Endothelial cell of umbilical vein (primary cell): ENCODE measurements at regions of chr14 and their contacts with region 1.

Region 1: DNA sequence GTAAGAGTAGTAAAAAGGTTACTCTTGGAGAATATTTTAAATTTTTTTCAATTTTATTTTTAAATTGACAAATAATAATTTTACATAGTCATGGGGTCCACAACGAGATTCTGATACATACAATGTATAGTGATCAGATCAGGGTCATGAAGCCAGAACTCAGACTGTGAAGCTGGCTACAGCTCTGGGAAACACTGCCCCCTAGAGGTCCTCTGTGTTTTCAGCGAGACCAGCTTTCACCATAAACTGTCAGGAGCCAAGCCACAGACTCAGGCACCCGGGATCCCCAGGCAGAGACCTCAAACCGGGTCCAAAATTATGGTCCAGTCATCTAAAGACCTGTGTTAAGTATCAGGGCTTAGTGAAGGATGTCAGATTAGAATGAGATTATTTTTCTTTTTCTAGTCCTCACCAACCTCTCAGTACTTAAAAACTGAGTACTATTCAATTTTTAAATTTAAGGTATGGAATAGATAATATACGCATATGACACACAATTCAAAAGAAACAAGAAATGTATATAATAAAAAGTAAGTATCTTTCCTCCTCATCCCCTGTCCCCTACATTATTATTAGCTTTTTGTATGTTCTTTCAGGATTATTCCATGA is 397.1 kb downstream of the MDGA2 start:
- DNase-seq: peak; percentile 64
- H3K4me3 ChIP-seq: no peak overlapping the region
- H3K27ac ChIP-seq: no peak overlapping the region
- H3K4me1 ChIP-seq: no peaks in the 10 kb centered on the region
- H3K27me3 ChIP-seq: no peaks in the 10 kb centered on the region
- CTCF ChIP-seq: peak; percentile 78 to 85
- POLR2A ChIP-seq: no peak

Region 2: DNA sequence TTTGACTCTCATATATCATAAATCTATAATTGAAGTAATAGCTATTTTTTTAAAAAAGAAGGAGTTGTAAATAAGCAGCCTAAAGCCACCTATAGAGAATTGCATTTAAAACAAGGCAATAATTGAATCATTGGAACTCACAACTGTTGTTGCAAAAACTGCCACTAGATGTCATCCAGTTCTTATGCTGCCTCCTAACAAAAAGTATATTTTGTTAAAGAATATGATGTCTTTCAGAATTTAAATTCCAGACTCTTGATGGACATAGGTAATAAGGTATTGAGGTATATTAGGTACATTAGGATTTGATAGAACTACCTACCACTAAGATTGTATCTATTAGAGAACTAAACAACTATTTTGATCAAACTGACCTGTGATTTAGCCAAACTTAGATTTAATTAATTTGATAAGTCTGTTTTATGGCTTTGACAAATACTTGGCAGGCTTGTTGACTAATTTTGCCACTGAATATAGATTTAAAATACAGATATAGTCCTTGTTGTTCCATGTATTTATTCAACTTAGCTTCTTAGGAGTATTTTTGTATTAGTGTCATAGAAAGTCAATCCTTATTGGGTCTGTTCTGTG is 1028.1 kb before region 1 on chr14:
- CTCF ChIA-PET with region 1: no interaction called
- POLR2A ChIA-PET with region 1: no interaction called
- dilution Hi-C with region 1: no loop called
- intact Hi-C with region 1: loop called (anchors 5 kb)
- DNase-seq: peak; percentile 52
- H3K4me3 ChIP-seq: no peak overlapping the region
- H3K27ac ChIP-seq: no peak overlapping the region
- H3K4me1 ChIP-seq: no peaks in the 10 kb centered on the region
- H3K27me3 ChIP-seq: no peaks in the 10 kb centered on the region
- CTCF ChIP-seq: peak; percentile 27 to 48
- POLR2A ChIP-seq: no peak

Region 3: DNA sequence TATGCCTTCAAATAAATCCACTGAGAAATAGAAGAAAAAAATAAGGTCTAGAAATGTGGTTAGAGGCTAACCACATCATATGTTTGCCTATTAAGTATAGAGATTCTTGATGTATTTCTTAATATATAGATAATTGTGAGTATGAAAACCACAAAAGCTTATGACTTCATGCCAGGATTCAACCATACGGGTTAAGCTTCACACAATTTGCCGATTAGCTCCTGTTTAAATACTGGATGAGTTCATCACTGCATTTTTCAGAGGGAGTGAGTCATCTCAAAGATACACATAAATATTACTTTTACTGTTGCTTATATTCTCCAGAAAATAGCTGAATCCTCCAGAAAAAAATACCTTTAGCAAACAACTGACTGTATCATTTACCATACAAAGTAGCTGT is 706.4 kb before region 1 on chr14:
- CTCF ChIA-PET with region 1: interaction called, 10 read pairs
- POLR2A ChIA-PET with region 1: no interaction called
- dilution Hi-C with region 1: no loop called
- intact Hi-C with region 1: no loop called
- DNase-seq: peak; percentile 59
- H3K4me3 ChIP-seq: no peak overlapping the region
- H3K27ac ChIP-seq: peak overlapping the region; percentile 55
- H3K4me1 ChIP-seq: peaks cover 40% of the 10 kb centered on the region
- H3K27me3 ChIP-seq: no peaks in the 10 kb centered on the region
- CTCF ChIP-seq: no peak
- POLR2A ChIP-seq: no peak

Region 4: DNA sequence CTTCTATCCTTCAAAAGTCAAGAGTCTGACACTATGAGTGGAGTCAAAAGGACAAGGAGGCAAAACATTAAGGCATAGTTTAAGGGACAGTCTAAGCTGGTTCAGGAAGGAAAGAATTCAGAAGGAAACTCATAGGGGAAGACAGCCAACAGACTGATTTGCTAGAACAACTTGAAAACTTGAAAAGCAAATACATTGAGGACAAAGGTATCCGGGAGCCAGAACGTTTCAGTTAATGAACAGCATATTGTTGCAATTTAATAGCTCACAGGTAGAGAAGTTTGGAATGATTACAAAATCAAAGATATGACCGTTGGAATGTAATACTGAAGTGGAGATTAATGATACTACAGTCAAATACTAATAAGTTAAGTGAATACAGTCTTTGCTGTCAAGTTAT is 314.0 kb before region 1 on chr14:
- CTCF ChIA-PET with region 1: no interaction called
- POLR2A ChIA-PET with region 1: no interaction called
- dilution Hi-C with region 1: no loop called
- intact Hi-C with region 1: no loop called
- DNase-seq: no peak
- H3K4me3 ChIP-seq: no peak overlapping the region
- H3K27ac ChIP-seq: no peak overlapping the region
- H3K4me1 ChIP-seq: no peaks in the 10 kb centered on the region
- H3K27me3 ChIP-seq: no peaks in the 10 kb centered on the region
- CTCF ChIP-seq: no peak
- POLR2A ChIP-seq: no peak

Region 5: GRCh38 chr14:47040550-47040949 is 237.8 kb before region 1 on chr14:
- CTCF ChIA-PET with region 1: interaction called, 14 read pairs
- POLR2A ChIA-PET with region 1: no interaction called
- dilution Hi-C with region 1: no loop called
- intact Hi-C with region 1: loop called (anchors 1 kb)
- DNase-seq: peak; percentile 51
- H3K4me3 ChIP-seq: no peak overlapping the region
- H3K27ac ChIP-seq: no peak overlapping the region
- H3K4me1 ChIP-seq: no peaks in the 10 kb centered on the region
- H3K27me3 ChIP-seq: no peaks in the 10 kb centered on the region
- CTCF ChIP-seq: peak; percentile 5 to 13
- POLR2A ChIP-seq: no peak

Region 6: GRCh38 chr14:47085678-47086077 is 192.7 kb before region 1 on chr14:
- CTCF ChIA-PET with region 1: interaction called, 12 read pairs
- POLR2A ChIA-PET with region 1: no interaction called
- dilution Hi-C with region 1: no loop called
- intact Hi-C with region 1: no loop called
- DNase-seq: no peak
- H3K4me3 ChIP-seq: no peak overlapping the region
- H3K27ac ChIP-seq: no peak overlapping the region
- H3K4me1 ChIP-seq: no peaks in the 10 kb centered on the region
- H3K27me3 ChIP-seq: no peaks in the 10 kb centered on the region
- CTCF ChIP-seq: no peak
- POLR2A ChIP-seq: no peak

Region 7: DNA sequence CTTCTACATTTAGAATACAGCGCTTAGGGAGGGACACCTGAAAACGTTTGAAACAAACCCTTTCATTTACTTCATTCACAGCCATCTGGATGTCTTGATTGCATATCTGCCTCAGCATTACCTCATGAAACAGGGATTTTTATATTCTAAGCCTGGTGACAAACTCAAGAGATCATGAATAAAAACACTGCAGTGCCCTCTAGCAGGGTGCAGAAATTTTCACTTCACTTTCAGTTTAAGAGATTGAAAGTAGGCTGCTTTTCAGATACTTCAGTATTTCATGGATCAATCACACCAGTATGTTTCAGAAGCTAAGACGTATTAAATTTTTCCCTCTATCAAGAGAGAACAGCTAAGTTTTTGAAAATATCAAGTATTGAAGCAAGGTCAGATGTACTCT is 70.7 kb before region 1 on chr14:
- CTCF ChIA-PET with region 1: interaction called, 12 read pairs
- POLR2A ChIA-PET with region 1: no interaction called
- dilution Hi-C with region 1: no loop called
- intact Hi-C with region 1: no loop called
- DNase-seq: peak; percentile 59
- H3K4me3 ChIP-seq: no peak overlapping the region
- H3K27ac ChIP-seq: no peak overlapping the region
- H3K4me1 ChIP-seq: peaks cover 10% of the 10 kb centered on the region
- H3K27me3 ChIP-seq: no peaks in the 10 kb centered on the region
- CTCF ChIP-seq: peak in 1 of 2 donors; percentile 9
- POLR2A ChIP-seq: no peak

Region 8: DNA sequence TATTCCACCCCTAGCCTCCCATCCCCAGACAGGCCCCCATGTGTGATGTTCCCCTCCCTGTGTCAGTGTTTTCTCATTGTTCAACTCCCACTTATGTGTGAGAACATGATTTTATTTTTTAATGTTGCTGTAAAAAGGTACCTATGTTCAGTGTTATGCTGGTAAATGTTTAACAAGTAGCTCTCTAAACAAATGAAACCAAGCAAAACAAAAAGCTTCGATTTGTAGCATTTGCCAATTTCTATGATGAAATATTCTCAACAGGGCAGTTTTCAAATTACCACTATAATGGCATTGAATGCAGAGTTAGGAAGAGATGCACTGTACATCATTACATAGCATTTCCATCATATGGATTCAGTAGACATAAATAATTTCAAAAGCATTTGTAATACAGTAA is 13.5 kb before region 1 on chr14:
- CTCF ChIA-PET with region 1: interaction called, 14 read pairs
- POLR2A ChIA-PET with region 1: no interaction called
- dilution Hi-C with region 1: no loop called
- intact Hi-C with region 1: no loop called
- DNase-seq: no peak
- H3K4me3 ChIP-seq: no peak overlapping the region
- H3K27ac ChIP-seq: no peak overlapping the region
- H3K4me1 ChIP-seq: peaks cover 4% of the 10 kb centered on the region
- H3K27me3 ChIP-seq: no peaks in the 10 kb centered on the region
- CTCF ChIP-seq: no peak
- POLR2A ChIP-seq: no peak

Region 9: GRCh38 chr14:47346849-47347248 is 68.5 kb after region 1 on chr14:
- CTCF ChIA-PET with region 1: no interaction called
- POLR2A ChIA-PET with region 1: no interaction called
- dilution Hi-C with region 1: no loop called
- intact Hi-C with region 1: no loop called
- DNase-seq: no peak
- H3K4me3 ChIP-seq: no peak overlapping the region
- H3K27ac ChIP-seq: no peak overlapping the region
- H3K4me1 ChIP-seq: no peaks in the 10 kb centered on the region
- H3K27me3 ChIP-seq: no peaks in the 10 kb centered on the region
- CTCF ChIP-seq: no peak
- POLR2A ChIP-seq: no peak